ENCODE measurements at regions of chr2 and their contacts with region 1.

Region 1: GRCh38 chr2:136238286-136239078 is 120.5 kb upstream of the CXCR4 start:
- DNase-seq: peak; percentile 93
- ATAC-seq: peak; percentile 70
- H3K4me3 ChIP-seq: peak overlapping the region in 1 of 5 experiments; percentile 17
- H3K4me3 Mint-ChIP-seq: peak overlapping the region; percentile 23
- H3K27ac ChIP-seq: peak overlapping the region; percentile 98
- H3K27ac Mint-ChIP-seq: peak overlapping the region; percentile 87
- H3K4me1 ChIP-seq: peaks cover 66 to 74% of the 10 kb centered on the region in 2 donors
- H3K4me1 Mint-ChIP-seq: peaks cover 85% of the 10 kb centered on the region
- H3K27me3 ChIP-seq: no peaks in the 10 kb centered on the region
- H3K27me3 Mint-ChIP-seq: no peaks in the 10 kb centered on the region
- CTCF ChIP-seq: no peak

Region 2: GRCh38 chr2:135997380-135997779 is 241.1 kb before region 1 on chr2:
- CTCF ChIA-PET with region 1: interaction called, 16 read pairs
- POLR2A ChIA-PET with region 1: interaction called, 7 read pairs
- intact Hi-C with region 1: no loop called
- DNase-seq: peak; percentile 83
- ATAC-seq: peak; percentile 95
- H3K4me3 ChIP-seq: peak overlapping the region in 3 of 5 experiments; percentile 8 to 17 (median 10)
- H3K4me3 Mint-ChIP-seq: peak overlapping the region; percentile 74
- H3K27ac ChIP-seq: peak overlapping the region; percentile 47 to 50
- H3K27ac Mint-ChIP-seq: peak overlapping the region; percentile 79
- H3K4me1 ChIP-seq: peaks cover 52 to 57% of the 10 kb centered on the region in 2 donors
- H3K4me1 Mint-ChIP-seq: peaks cover 51% of the 10 kb centered on the region
- H3K27me3 ChIP-seq: no peaks in the 10 kb centered on the region
- H3K27me3 Mint-ChIP-seq: no peaks in the 10 kb centered on the region
- CTCF ChIP-seq: peak; percentile 26

Region 3: GRCh38 chr2:136129601-136130000 is 108.9 kb before region 1 on chr2:
- CTCF ChIA-PET with region 1: interaction called, 97 read pairs
- POLR2A ChIA-PET with region 1: interaction called, 224 read pairs
- intact Hi-C with region 1: loop called (anchors 1 kb)
- DNase-seq: peak; percentile 73
- ATAC-seq: peak; percentile 2
- H3K4me3 ChIP-seq: peak overlapping the region in 2 of 5 experiments; percentile 4 to 11
- H3K4me3 Mint-ChIP-seq: peak overlapping the region; percentile 83
- H3K27ac ChIP-seq: peak overlapping the region; percentile 98 to 99
- H3K27ac Mint-ChIP-seq: peak overlapping the region; percentile 96
- H3K4me1 ChIP-seq: peaks cover 96 to 98% of the 10 kb centered on the region in 2 donors
- H3K4me1 Mint-ChIP-seq: peaks cover 94% of the 10 kb centered on the region
- H3K27me3 ChIP-seq: no peaks in the 10 kb centered on the region
- H3K27me3 Mint-ChIP-seq: no peaks in the 10 kb centered on the region
- CTCF ChIP-seq: no peak

Region 4: GRCh38 chr2:136168720-136169119 is 69.8 kb before region 1 on chr2:
- CTCF ChIA-PET with region 1: no interaction called
- POLR2A ChIA-PET with region 1: no interaction called
- intact Hi-C with region 1: no loop called
- DNase-seq: no peak
- ATAC-seq: no peak
- H3K4me3 ChIP-seq: no peak overlapping the region
- H3K4me3 Mint-ChIP-seq: no peak overlapping the region
- H3K27ac ChIP-seq: no peak overlapping the region
- H3K27ac Mint-ChIP-seq: no peak overlapping the region
- H3K4me1 ChIP-seq: peaks cover 7 to 12% of the 10 kb centered on the region in 2 donors
- H3K4me1 Mint-ChIP-seq: peaks cover 35% of the 10 kb centered on the region
- H3K27me3 ChIP-seq: no peaks in the 10 kb centered on the region
- H3K27me3 Mint-ChIP-seq: no peaks in the 10 kb centered on the region
- CTCF ChIP-seq: no peak

Region 5: DNA sequence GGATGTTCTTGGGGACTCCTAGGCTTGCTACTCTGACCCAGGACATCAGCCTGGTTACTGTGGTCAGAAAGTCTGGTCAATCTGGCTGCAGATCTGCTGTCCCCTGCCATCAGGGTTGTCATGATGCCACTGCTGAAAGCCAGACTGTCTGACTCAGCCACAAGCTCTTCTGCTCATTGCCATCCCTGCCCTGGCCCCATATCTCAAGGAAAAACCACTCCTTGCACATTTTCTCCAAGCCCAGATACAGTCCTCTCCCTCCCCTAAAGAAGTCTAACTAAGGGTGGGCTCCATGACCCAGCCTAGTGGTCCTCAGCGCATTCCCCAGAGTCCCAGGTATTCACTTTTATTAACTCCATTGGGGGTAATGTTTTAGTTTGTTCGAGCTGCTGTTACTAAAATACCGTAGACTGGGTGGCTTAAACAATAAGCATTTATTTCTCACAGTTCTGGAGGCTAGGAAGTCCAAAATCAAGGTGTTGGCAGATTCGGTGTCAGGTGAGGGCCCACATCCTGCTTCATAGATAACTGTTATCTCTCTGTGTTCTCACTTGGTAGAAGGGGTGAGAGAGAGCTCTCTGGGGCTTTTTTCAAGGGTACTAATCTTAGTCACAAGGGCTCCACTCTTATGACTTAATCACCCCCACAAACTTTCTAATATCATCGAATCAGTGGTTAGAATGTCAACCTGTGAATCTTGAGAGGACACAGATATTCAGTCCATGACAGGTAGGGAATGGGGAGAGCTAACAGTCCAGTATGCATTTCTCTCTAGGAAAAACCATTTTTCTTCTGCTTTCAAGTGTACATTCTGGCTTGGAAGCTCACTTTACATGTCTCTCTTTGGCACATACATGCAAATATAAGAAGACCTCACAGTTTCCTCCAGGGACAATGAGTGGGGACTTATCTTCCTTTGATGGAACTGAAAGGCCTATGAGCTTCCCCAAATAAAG is 25.8 kb before region 1 on chr2:
- CTCF ChIA-PET with region 1: interaction called, 58 read pairs
- POLR2A ChIA-PET with region 1: interaction called, 135 read pairs
- intact Hi-C with region 1: loop called (anchors 1 kb)
- DNase-seq: peak; percentile 81
- ATAC-seq: peak; percentile 74
- H3K4me3 ChIP-seq: no peak overlapping the region
- H3K4me3 Mint-ChIP-seq: peak overlapping the region; percentile 74
- H3K27ac ChIP-seq: peak overlapping the region; percentile 53 to 99
- H3K27ac Mint-ChIP-seq: peak overlapping the region; percentile 81
- H3K4me1 ChIP-seq: peaks cover 80 to 81% of the 10 kb centered on the region in 2 donors
- H3K4me1 Mint-ChIP-seq: peaks cover 96% of the 10 kb centered on the region
- H3K27me3 ChIP-seq: no peaks in the 10 kb centered on the region
- H3K27me3 Mint-ChIP-seq: no peaks in the 10 kb centered on the region
- CTCF ChIP-seq: no peak

Region 6: GRCh38 chr2:136255648-136256463 is 17.4 kb after region 1 on chr2:
- CTCF ChIA-PET with region 1: interaction called, 79 read pairs
- POLR2A ChIA-PET with region 1: interaction called, 63 read pairs
- intact Hi-C with region 1: loop called (anchors 1 kb)
- DNase-seq: peak; percentile 78
- ATAC-seq: peak; percentile 69
- H3K4me3 ChIP-seq: no peak overlapping the region
- H3K4me3 Mint-ChIP-seq: peak overlapping the region; percentile 64
- H3K27ac ChIP-seq: peak overlapping the region; percentile 43 to 74
- H3K27ac Mint-ChIP-seq: peak overlapping the region; percentile 92
- H3K4me1 ChIP-seq: peaks cover 55% of the 10 kb centered on the region in 2 donors
- H3K4me1 Mint-ChIP-seq: peaks cover 91% of the 10 kb centered on the region
- H3K27me3 ChIP-seq: no peaks in the 10 kb centered on the region
- H3K27me3 Mint-ChIP-seq: no peaks in the 10 kb centered on the region
- CTCF ChIP-seq: peak; percentile 24

Region 7: DNA sequence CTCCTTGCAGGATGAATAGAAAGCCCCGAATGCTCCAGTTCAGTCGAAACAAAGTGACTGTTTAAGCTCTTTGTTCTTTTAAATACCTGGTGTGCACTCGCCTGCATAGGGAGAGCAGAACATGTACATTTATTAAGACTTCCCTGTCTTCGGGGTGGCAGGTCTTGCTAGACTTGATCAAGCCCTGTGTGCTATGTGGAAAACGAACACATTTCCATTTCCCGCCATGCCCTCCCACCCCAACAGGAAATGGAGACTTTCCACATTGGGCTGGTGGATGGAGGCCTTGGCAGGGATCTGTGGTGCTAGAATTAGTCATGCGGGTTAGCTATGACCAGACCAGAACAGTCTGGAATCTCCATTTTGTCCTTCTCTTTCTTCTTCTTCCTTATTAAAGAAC is 205.8 kb after region 1 on chr2:
- CTCF ChIA-PET with region 1: no interaction called
- POLR2A ChIA-PET with region 1: no interaction called
- intact Hi-C with region 1: no loop called
- DNase-seq: no peak
- ATAC-seq: no peak
- H3K4me3 ChIP-seq: no peak overlapping the region
- H3K4me3 Mint-ChIP-seq: no peak overlapping the region
- H3K27ac ChIP-seq: no peak overlapping the region
- H3K27ac Mint-ChIP-seq: no peak overlapping the region
- H3K4me1 ChIP-seq: no peaks in the 10 kb centered on the region
- H3K4me1 Mint-ChIP-seq: no peaks in the 10 kb centered on the region
- H3K27me3 ChIP-seq: peaks cover 0 to 2% (median 1%) of the 10 kb centered on the region in 4 experiments
- H3K27me3 Mint-ChIP-seq: peaks cover 12% of the 10 kb centered on the region
- CTCF ChIP-seq: no peak

Region 8: DNA sequence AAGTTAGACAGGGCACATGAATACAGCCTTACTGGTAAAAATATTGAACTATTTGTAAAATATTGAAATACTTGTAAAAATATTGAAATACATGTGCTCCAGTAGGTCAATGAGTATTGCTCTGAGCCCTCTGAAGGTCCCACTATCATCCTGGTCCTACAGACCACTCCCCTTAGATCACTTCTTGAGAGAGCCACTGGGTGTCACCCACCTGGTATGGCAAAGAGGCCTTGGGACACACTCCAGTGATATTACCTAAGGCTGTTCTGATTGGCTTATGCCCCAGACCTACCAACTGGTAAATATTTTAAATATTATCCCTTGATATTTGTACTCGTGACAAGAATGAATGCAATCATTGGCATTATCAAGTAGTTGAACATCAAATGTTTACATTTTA is 531.9 kb after region 1 on chr2:
- CTCF ChIA-PET with region 1: no interaction called
- POLR2A ChIA-PET with region 1: no interaction called
- intact Hi-C with region 1: no loop called
- DNase-seq: no peak
- ATAC-seq: no peak
- H3K4me3 ChIP-seq: no peak overlapping the region
- H3K4me3 Mint-ChIP-seq: no peak overlapping the region
- H3K27ac ChIP-seq: no peak overlapping the region
- H3K27ac Mint-ChIP-seq: no peak overlapping the region
- H3K4me1 ChIP-seq: no peaks in the 10 kb centered on the region
- H3K4me1 Mint-ChIP-seq: peaks cover 4% of the 10 kb centered on the region
- H3K27me3 ChIP-seq: peaks cover 0 to 16% (median 9%) of the 10 kb centered on the region in 4 experiments
- H3K27me3 Mint-ChIP-seq: peaks cover 34% of the 10 kb centered on the region
- CTCF ChIP-seq: no peak